Sciatic nerve (tissue), 2 donors: ENCODE measurements at regions of chr17 and their contacts with region 1.

Region 1: GRCh38 chr17:44919885-44920564 is 4.7 kb upstream of the GFAP start:
- DNase-seq: peak; percentile 85
- ATAC-seq: peak; percentile 95

Region 2: DNA sequence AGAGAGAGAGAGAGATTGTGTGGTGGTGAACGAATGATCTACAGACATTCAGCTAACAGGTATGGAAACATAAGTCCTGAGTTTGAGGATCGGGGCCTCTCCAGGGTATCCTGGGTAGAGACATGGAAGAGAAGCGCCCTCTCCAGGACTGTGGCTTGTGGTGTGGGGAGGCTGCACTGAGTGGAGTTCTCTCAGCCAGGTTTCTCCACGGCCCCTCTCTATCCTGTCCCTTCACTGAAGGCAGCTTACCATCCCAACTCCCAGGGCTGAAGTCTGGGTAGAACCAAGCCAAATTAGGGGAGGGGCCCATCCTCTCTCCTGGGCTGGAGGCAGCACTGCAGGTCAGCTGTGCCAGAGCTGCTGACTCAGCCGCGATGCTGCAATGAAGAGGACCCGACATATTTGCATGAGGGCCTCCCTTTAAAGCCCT is 41.9 kb after region 1 on chr17:
- intact Hi-C with region 1: no loop called
- DNase-seq: no peak
- ATAC-seq: no peak

Region 3: GRCh38 chr17:45021607-45022287 is 101.7 kb after region 1 on chr17:
- intact Hi-C with region 1: loop called (anchors 2 kb)
- DNase-seq: peak; percentile 83
- ATAC-seq: peak; percentile 75